AG04449 (cell line): ENCODE measurements at regions of chr3 and their contacts with region 1.

Region 1: GRCh38 chr3:58305882-58306711 is at the starts of genes HTD2 and RPP14:
- DNase-seq: peak; percentile 76
- H3K4me3 ChIP-seq: peak within 1 kb of the TSS; percentile 84
- CTCF ChIP-seq: peak; percentile 98

Region 2: DNA sequence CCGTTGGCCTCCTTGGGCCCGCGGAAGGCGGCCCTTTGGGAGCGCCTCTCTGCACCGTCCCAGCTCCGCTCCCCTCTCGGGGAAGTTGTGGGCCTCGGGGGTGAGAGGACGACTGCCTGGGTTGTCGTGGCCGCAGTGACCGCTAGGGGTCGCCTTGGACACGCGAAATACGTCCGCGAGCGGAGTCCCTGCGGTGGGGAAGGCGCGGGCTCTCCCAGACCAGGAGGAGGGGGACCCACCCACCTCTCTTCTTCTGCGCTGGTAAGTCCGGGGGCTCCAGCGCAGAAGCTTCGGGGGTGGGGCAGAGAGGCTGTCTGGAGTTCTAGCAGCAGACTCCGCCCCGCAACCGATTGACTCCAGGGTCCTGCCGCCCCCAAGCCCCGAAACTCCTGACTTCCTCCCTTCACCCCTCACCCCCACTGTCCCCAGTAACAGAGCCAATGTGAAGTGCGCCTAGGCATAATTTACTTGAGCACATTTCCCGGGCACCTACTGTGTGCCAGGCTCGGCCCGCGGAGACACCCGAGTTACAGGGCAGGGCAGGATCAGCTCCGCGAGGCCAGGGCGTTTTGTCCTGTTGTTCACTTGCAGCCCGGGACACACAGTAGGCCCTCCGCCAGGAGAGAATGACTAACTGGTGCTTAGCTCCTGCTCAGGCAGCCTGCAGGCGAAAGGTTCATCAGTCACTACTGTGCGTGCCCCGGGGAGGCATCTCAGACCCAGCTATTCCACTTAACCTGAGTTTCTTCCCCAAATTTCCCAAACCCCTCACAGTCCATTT is 128.2 kb before region 1 on chr3:
- CTCF ChIA-PET with region 1: interaction called, 1,062 read pairs
- POLR2A ChIA-PET with region 1: interaction called, 4 read pairs
- DNase-seq: no peak
- H3K4me3 ChIP-seq: peak overlapping the region; percentile 52
- CTCF ChIP-seq: peak; percentile 96

Region 3: DNA sequence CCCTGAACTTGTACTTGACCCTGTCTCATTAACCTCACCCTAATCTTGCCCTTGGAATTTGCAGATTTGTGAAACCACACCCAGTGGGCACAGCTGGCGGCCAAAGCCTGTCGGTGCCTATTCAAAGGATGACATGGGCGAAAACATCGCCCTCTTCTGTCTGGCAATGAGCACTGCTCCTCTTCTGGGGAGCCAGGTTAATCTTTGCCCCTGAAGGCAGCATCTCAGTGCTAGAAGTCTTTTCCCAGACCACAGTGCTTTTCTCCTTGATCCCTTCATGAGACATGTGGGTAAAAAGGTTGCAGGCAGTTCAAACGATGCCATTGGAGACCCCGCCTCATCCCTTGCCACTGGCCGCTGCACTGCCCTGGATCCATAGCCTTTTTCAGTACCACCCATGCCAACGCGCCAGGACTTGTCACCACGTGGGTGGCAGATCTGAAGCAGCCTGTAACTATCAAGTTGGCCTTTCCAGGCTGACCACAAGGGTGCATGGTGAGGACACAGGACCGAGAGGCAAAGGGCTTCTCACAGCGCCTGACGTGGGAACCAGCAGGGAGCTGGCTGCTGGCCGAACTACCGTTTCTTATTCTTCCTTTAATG is 88.8 kb before region 1 on chr3:
- CTCF ChIA-PET with region 1: interaction called, 18 read pairs
- POLR2A ChIA-PET with region 1: interaction called, 3 read pairs
- DNase-seq: no peak
- H3K4me3 ChIP-seq: no peak overlapping the region
- CTCF ChIP-seq: peak; percentile 76

Region 4: DNA sequence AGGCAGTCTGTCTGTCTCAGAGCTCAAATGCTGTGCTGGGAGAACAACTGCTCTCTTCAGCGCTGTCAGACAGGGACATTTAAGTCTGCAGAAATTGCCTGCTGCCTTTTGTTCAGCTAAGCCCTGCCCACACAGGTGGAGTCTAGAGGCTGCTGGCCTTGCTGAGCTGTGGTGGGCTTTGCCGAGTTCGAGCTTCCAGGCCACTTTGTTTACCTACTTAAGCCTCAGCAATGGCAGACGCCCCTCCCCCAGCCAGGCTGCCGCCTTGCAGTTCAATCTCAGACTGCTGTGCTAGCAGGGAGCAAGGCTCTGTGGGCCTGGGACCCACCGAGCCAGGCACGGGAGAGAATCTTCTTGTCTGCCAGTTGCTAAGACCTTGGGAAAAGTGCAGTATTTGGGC is 25.0 kb before region 1 on chr3:
- CTCF ChIA-PET with region 1: interaction called, 11 read pairs
- POLR2A ChIA-PET with region 1: no interaction called
- DNase-seq: no peak
- H3K4me3 ChIP-seq: no peak overlapping the region
- CTCF ChIP-seq: no peak

Region 5: GRCh38 chr3:58383904-58384303 is 77.8 kb after region 1 on chr3:
- CTCF ChIA-PET with region 1: interaction called, 12 read pairs
- POLR2A ChIA-PET with region 1: no interaction called
- DNase-seq: peak; percentile 98
- H3K4me3 ChIP-seq: no peak overlapping the region
- CTCF ChIP-seq: no peak

Region 6: DNA sequence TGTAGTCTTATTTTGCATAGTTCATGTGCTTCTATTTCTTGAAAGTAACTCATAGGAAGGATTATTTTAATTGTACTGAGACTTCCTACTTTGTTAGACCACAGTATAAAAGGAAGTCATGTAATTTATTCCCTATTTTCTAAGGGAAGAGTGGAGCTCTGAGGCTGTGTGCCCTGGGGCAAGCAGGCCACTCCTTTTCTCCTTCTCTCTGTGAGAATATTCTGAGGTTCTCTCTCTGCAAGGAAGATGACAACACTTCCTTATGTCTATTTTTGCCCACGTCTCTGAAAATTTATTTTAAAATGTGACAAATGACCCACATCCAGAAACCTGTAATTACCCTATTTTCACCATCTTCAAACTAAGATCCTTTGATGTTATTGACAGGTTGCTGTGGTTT is 196.8 kb after region 1 on chr3:
- CTCF ChIA-PET with region 1: interaction called, 11 read pairs
- POLR2A ChIA-PET with region 1: no interaction called
- DNase-seq: no peak
- H3K4me3 ChIP-seq: no peak overlapping the region
- CTCF ChIP-seq: no peak

Region 7: GRCh38 chr3:58630076-58630709 is 324.1 kb after region 1 on chr3:
- CTCF ChIA-PET with region 1: interaction called, 24 read pairs
- POLR2A ChIA-PET with region 1: no interaction called
- DNase-seq: no peak
- H3K4me3 ChIP-seq: no peak overlapping the region
- CTCF ChIP-seq: peak; percentile 79